ENCODE measurements at regions of chr3 and their contacts with region 1.

Region 1: GRCh38 chr3:124786441-124787241 is 56.4 kb downstream of the UMPS start:
- DNase-seq: no peak
- CTCF ChIP-seq: no peak

Region 2: GRCh38 chr3:124797426-124797945 is 10.8 kb after region 1 on chr3:
- CTCF ChIA-PET with region 1: interaction called, 11 read pairs
- POLR2A ChIA-PET with region 1: no interaction called
- DNase-seq: no peak
- CTCF ChIP-seq: no peak

Measured in GM10248 (cell line).